CD14-positive monocyte (primary cell): ENCODE measurements at regions of chr19 and their contacts with region 1.

Region 1: GRCh38 chr19:39347332-39348164 is 5.3 kb downstream of the SAMD4B start:
- DNase-seq: no peak
- H3K4me3 ChIP-seq: no peak overlapping the region
- H3K4me3 Mint-ChIP-seq: no peak overlapping the region
- H3K27ac ChIP-seq: no peak overlapping the region
- H3K27ac Mint-ChIP-seq: peak overlapping the region in 2 of 7 donors; percentile 16 to 34
- H3K4me1 ChIP-seq: peaks cover 12 to 15% of the 10 kb centered on the region in 2 donors
- H3K4me1 Mint-ChIP-seq: peaks cover 40% of the 10 kb centered on the region
- H3K27me3 ChIP-seq: no peaks in the 10 kb centered on the region
- H3K27me3 Mint-ChIP-seq: peaks cover 0 to 4% (median 2%) of the 10 kb centered on the region in 3 donors
- CTCF ChIP-seq: no peak

Region 2: DNA sequence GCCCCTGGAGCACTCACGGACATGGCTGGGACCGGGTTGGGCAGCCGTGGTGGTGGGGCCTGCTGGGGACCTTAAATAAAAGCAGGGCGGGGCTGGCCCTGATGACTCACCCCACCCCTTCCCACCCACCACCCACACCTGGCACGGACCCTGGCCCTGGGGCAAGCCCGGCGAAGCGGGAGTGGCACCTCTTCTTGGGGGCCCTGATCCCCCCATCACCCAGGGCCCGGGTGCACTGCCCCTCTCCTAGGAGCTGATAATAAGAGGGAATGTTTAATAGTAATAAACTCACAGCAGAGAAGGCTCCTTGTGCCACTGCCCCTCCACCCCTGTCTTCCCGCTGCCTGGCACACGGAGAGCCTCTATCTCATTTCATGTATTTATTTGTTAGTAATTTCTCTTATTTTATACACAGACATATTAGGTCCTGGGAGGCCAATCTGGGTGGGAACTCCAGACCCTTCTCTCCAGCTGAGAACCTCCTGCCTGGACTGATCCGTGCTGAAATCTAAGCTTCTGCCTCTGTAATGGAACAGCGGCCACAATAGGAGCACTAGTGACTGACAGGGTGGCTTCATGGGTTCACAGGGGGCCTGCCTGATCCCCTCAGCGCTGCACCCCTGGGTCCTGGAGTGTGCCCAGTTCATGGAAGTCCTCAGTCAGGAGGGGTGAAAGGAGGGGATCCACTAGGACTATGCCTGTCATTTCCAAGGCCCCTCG is 573.9 kb before region 1 on chr19 and contains the start of gene LGALS7:
- intact Hi-C with region 1: no loop called
- DNase-seq: no peak
- H3K4me3 ChIP-seq: no peak within 1 kb of the TSS
- H3K4me3 Mint-ChIP-seq: peak within 1 kb of the TSS in 1 of 2 donors; percentile 14
- H3K27ac ChIP-seq: no peak within 1 kb of the TSS
- H3K27ac Mint-ChIP-seq: no peak within 1 kb of the TSS
- H3K4me1 ChIP-seq: peaks cover 5 to 13% of the 10 kb centered on the region in 2 donors
- H3K4me1 Mint-ChIP-seq: peaks cover 5% of the 10 kb centered on the region
- H3K27me3 ChIP-seq: no peaks in the 10 kb centered on the region
- H3K27me3 Mint-ChIP-seq: peaks cover 0 to 4% (median under 1%) of the 10 kb centered on the region in 3 donors
- CTCF ChIP-seq: no peak
- polyA plus RNA-seq, gene LGALS7: not detected

Region 3: GRCh38 chr19:39237200-39238184 is 110.1 kb before region 1 on chr19:
- intact Hi-C with region 1: no loop called
- DNase-seq: no peak
- H3K4me3 ChIP-seq: no peak overlapping the region
- H3K4me3 Mint-ChIP-seq: peak overlapping the region; percentile 56 to 64
- H3K27ac ChIP-seq: no peak overlapping the region
- H3K27ac Mint-ChIP-seq: no peak overlapping the region
- H3K4me1 ChIP-seq: no peaks in the 10 kb centered on the region
- H3K4me1 Mint-ChIP-seq: peaks cover 5% of the 10 kb centered on the region
- H3K27me3 ChIP-seq: no peaks in the 10 kb centered on the region
- H3K27me3 Mint-ChIP-seq: peaks cover 2 to 7% (median 4%) of the 10 kb centered on the region in 3 donors
- CTCF ChIP-seq: no peak

Region 4: GRCh38 chr19:39381910-39382611 is 34.5 kb after region 1 on chr19:
- intact Hi-C with region 1: loop called in 1 of 2 experiments (anchors 5 kb)
- DNase-seq: no peak
- H3K4me3 ChIP-seq: no peak overlapping the region
- H3K4me3 Mint-ChIP-seq: no peak overlapping the region
- H3K27ac ChIP-seq: no peak overlapping the region
- H3K27ac Mint-ChIP-seq: peak overlapping the region in 2 of 7 donors; percentile 22 to 40
- H3K4me1 ChIP-seq: no peaks in the 10 kb centered on the region
- H3K4me1 Mint-ChIP-seq: peaks cover 2% of the 10 kb centered on the region
- H3K27me3 ChIP-seq: no peaks in the 10 kb centered on the region
- H3K27me3 Mint-ChIP-seq: peaks cover 0 to 1% (median 0%) of the 10 kb centered on the region in 3 donors
- CTCF ChIP-seq: no peak